Sciatic nerve (tissue), 2 donors: ENCODE measurements at regions of chr14 and their contacts with region 1.

Region 1: DNA sequence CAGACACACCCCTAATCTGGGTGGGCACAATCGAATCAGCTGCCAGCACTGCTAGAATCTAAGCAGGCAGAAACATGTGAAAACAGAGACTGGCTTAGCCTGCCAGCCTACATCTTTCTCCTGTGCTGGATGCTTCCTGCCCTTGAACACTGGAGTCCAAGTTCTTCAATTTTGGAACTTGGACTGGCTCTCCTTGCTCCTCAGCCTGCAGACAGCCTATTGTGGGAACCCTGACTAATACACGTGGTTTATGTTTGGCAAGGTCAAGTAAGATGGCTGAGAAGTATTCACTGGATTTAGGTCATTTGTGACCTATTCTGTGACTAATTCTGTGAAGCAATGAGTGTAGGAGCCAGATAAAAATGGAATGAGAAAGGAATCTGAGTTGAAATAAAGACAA is 11.0 kb downstream of the GPR135 start:
- DNase-seq: no peak
- ATAC-seq: peak; percentile 86

Region 2: DNA sequence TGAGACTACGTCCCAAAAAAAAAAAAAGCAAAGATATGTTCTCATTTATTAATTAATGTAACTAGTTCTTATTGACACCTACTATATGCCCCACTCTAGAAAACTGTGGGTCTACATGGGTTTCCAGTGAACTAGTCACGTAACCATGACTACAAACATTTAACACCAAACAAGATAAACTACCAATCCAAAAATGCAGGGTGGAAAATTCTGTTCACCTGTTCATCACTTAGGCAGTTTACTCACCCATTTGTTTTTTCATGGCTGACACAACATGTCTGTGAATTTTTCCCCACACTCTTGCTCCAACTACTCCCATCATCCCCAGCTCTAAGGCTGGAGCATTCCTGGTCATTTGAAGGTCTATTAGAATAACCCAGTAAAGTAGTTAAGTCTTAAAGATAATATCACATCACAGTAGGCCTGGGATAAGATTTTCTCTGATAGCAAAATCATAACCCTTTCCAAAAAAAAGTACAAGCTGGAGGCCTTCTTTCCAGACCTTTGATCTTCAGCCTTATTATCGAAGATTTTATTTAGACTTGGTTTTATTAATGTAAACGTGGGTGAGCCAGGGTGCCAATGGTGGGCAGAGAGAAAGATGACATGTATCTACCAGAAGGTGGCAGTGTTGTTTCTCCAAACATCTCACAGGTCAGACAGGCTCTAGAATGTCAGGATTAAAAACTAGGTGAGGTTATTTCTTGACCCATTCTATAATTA is 327.3 kb before region 1 on chr14:
- intact Hi-C with region 1: loop called (anchors 5 kb)
- DNase-seq: no peak
- ATAC-seq: peak; percentile 90